ENCODE measurements at regions of chr4 and their contacts with region 1.

Region 1: GRCh38 chr4:176270669-176271068 is 1.6 kb upstream of the ASB5 start:
- DNase-seq: peak; percentile 88 to 93
- ATAC-seq: peak; percentile 83
- H3K4me3 ChIP-seq: peak overlapping the region in 2 of 4 donors; percentile 21 to 62
- H3K27ac ChIP-seq: peak overlapping the region; percentile 88 to 98 (median 94)
- H3K4me1 ChIP-seq: peaks cover 25 to 47% of the 10 kb centered on the region in 2 donors
- H3K27me3 ChIP-seq: no peaks in the 10 kb centered on the region
- CTCF ChIP-seq: no peak
- POLR2A ChIP-seq: peak; percentile 47 to 67

Region 2: GRCh38 chr4:176238157-176238610 is 32.5 kb before region 1 on chr4:
- in situ Hi-C with region 1: no loop called
- intact Hi-C with region 1: loop called (anchors 1 kb)
- DNase-seq: no peak
- ATAC-seq: peak; percentile 81 to 87
- H3K4me3 ChIP-seq: peak overlapping the region; percentile 1 to 32 (median 28)
- H3K27ac ChIP-seq: peak overlapping the region; percentile 82 to 91 (median 86)
- H3K4me1 ChIP-seq: peaks cover 21 to 70% of the 10 kb centered on the region in 2 donors
- H3K27me3 ChIP-seq: no peaks in the 10 kb centered on the region
- CTCF ChIP-seq: no peak
- POLR2A ChIP-seq: peak; percentile 6 to 25

Region 3: DNA sequence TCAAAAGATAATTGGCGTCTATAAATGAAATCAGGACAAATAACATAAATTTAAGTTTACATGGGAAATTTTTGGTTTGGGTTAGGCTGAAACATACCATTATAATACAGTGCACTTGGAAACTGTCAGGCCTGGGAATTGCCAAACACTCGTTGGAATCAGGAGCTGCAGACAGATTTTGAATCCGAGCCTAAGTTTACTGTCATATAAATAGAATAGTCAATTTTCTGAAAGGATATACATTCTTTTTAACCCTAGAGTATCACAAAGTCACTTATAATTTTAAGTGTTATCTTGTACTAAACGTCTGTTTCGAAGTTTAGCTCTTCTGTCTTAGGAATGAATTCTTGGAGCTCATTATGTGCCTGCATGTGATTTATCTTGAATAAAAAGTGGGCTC is 288.0 kb after region 1 on chr4:
- in situ Hi-C with region 1: no loop called
- intact Hi-C with region 1: no loop called
- DNase-seq: no peak
- ATAC-seq: no peak
- H3K4me3 ChIP-seq: no peak overlapping the region
- H3K27ac ChIP-seq: no peak overlapping the region
- H3K4me1 ChIP-seq: peaks cover 0 to 2% of the 10 kb centered on the region in 2 donors
- H3K27me3 ChIP-seq: no peaks in the 10 kb centered on the region
- CTCF ChIP-seq: no peak
- POLR2A ChIP-seq: no peak

Region 4: DNA sequence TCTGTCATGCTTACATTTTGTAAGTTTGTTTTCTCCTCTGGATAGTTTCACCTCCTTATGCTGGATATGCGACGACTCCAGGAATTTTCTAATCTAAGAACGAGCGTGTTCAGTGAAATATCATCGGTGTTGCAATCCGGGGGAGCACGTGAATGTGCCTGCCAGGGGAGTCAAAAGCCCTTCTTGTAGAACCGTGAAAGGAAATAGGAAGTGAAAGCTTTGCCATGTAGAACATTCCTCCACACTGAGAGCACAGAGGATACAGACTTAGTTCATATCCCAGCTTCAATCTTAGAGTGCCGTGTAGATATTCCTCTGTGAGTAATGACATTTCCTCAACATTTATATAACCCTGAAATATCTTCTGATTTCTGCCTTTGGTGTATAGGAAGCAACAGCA is 400.9 kb after region 1 on chr4:
- in situ Hi-C with region 1: no loop called
- intact Hi-C with region 1: no loop called
- DNase-seq: no peak
- ATAC-seq: no peak
- H3K4me3 ChIP-seq: no peak overlapping the region
- H3K27ac ChIP-seq: no peak overlapping the region
- H3K4me1 ChIP-seq: peaks cover 0 to 8% of the 10 kb centered on the region in 2 donors
- H3K27me3 ChIP-seq: no peaks in the 10 kb centered on the region
- CTCF ChIP-seq: no peak
- POLR2A ChIP-seq: no peak

Measured in gastrocnemius medialis (tissue), 4 donors.